Testis (tissue), 5 donors: ENCODE measurements at regions of chr1 and their contacts with region 1.

Region 1: GRCh38 chr1:17236779-17237560 is 11.9 kb upstream of the PADI3 start:
- DNase-seq: peak; percentile 93
- H3K4me3 ChIP-seq: no peak overlapping the region
- H3K27ac ChIP-seq: no peak overlapping the region
- H3K4me1 ChIP-seq: no peaks in the 10 kb centered on the region
- H3K27me3 ChIP-seq: no peaks in the 10 kb centered on the region
- CTCF ChIP-seq: peak; percentile 83 to 92 (median 88)
- POLR2A ChIP-seq: no peak

Region 2: GRCh38 chr1:17059739-17060460 is 177.1 kb before region 1 on chr1:
- intact Hi-C with region 1: loop called (anchors 5 kb)
- DNase-seq: peak; percentile 80
- H3K4me3 ChIP-seq: no peak overlapping the region
- H3K27ac ChIP-seq: no peak overlapping the region
- H3K4me1 ChIP-seq: no peaks in the 10 kb centered on the region
- H3K27me3 ChIP-seq: no peaks in the 10 kb centered on the region
- CTCF ChIP-seq: peak in 2 of 3 experiments; percentile 50 to 52
- POLR2A ChIP-seq: no peak

Region 3: GRCh38 chr1:17125756-17126237 is 111.2 kb before region 1 on chr1:
- intact Hi-C with region 1: loop called (anchors 5 kb)
- DNase-seq: peak; percentile 95
- H3K4me3 ChIP-seq: peak overlapping the region in 1 of 2 donors; percentile 11
- H3K27ac ChIP-seq: no peak overlapping the region
- H3K4me1 ChIP-seq: no peaks in the 10 kb centered on the region
- H3K27me3 ChIP-seq: no peaks in the 10 kb centered on the region
- CTCF ChIP-seq: peak; percentile 81 to 95 (median 91)
- POLR2A ChIP-seq: no peak